Heart left ventricle (tissue), 16 donors: ENCODE measurements at regions of chr3 and their contacts with region 1.

Region 1: DNA sequence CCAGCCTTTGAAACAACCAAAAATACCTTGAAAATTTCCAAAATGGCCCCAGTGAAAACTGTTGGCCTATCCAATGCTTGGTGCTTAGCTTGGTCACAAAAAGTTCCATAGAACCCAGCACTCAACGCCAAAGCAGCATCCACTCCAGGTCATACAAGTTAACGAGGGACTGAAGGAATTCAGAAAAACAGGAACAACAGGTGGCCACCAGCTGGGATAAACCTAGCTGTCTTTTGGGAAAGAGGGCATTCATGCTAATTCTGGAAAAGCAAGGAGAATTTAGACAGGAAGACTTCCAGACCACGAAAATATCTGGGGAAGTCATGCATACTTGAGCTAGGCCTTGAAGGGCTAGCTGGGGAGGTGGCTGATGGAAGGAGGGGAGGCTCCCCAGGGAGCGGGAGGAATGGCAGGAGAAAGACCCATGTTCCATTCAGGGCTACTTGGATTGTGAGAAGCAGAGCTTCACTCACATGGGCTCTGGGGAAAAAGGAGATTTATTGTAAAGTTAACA is 28.6 kb downstream of the COLQ start:
- DNase-seq: no peak
- ATAC-seq: no peak
- H3K4me3 ChIP-seq: no peak overlapping the region
- H3K27ac ChIP-seq: no peak overlapping the region
- H3K4me1 ChIP-seq: peaks cover 0 to 38% (median 7%) of the 10 kb centered on the region in 12 donors
- H3K27me3 ChIP-seq: no peaks in the 10 kb centered on the region
- CTCF ChIP-seq: no peak
- POLR2A ChIP-seq: no peak

Region 2: GRCh38 chr3:15345608-15346137 is 147.2 kb before region 1 on chr3:
- intact Hi-C with region 1: no loop called
- DNase-seq: no peak
- ATAC-seq: no peak
- H3K4me3 ChIP-seq: no peak overlapping the region
- H3K27ac ChIP-seq: no peak overlapping the region
- H3K4me1 ChIP-seq: peaks cover 0 to 33% (median 0%) of the 10 kb centered on the region in 12 donors
- H3K27me3 ChIP-seq: no peaks in the 10 kb centered on the region
- CTCF ChIP-seq: no peak
- POLR2A ChIP-seq: no peak

Region 3: DNA sequence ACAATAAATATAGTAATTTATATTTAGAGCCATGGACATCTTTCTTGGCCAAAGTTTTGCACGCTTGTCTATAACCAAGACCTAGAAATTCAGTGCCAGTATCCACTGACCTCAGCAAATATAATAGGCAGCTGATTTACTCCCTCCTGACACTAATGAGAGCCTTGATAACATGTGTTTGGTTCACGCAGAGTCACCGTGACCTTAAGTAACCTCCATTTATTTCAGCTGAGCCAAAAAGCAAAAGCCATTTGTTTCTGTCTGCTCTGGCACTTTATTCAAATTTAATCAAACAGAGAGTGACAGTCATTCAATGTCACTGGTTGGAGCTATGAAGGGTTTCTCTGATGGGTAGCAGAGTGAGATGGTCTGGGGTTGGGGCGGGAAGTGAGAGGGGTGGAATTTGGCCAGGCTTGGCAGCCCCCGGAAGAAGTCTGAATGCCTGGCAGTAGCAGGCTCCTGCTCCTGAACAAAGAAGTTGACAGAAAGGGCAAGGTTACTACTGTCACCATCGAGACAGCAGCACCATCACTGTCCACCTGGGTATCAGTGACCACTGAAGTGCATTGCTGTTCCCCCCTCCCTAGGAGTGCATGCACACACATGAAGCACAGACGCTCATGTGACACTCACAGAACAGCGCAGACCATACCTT is 14.5 kb before region 1 on chr3:
- intact Hi-C with region 1: loop called in 1 of 10 experiments (anchors 2 kb)
- DNase-seq: no peak
- ATAC-seq: peak; percentile 83 to 90 (median 86)
- H3K4me3 ChIP-seq: no peak overlapping the region
- H3K27ac ChIP-seq: peak overlapping the region in 6 of 12 donors; percentile 18 to 64 (median 48)
- H3K4me1 ChIP-seq: peaks cover 0 to 34% (median 16%) of the 10 kb centered on the region in 12 donors
- H3K27me3 ChIP-seq: no peaks in the 10 kb centered on the region
- CTCF ChIP-seq: no peak
- POLR2A ChIP-seq: no peak